BJ (cell line): ENCODE measurements at regions of chr1 and their contacts with region 1.

Region 1: DNA sequence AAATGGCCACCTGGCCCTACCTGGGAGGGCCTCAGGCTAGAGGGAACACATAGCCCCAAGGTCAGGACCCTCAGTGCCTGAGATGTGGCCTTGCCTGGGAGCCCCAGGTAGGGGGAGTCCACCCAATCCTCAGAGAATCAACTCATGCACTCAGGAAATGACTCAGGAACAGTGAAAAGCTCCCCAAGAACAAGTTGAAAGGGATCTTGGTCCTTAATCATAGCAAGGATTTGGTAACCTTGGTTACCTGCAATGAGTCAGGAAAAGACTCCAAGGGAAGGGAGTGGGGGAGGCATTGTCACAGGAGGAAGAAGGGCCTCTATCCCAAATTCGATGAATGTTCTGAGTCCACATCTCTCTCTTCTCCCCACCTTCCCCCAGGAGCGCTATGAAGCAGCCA is 17.0 kb downstream of the MAP7D1 start:
- DNase-seq: no peak
- H3K4me3 ChIP-seq: no peak overlapping the region
- H3K27me3 ChIP-seq: no peaks in the 10 kb centered on the region
- CTCF ChIP-seq: no peak

Region 2: DNA sequence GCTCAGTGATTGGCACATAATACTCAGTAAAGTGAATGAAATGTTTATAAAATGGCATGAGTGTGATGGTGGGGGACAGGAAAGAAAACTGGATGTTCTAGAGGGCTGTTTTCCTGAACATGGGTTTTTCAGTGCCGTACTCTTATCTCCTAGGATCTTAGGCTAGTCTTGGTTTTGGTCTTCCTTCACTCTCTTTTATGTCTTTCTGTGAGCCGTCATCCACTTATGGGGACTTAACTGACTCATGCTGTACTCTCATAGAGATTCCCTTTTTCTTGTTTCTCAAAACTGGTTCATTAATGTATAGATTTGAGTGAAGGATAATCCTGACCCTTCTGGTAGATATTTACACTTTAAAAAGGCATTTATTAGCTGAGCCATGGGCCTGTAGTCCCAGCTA is 225.4 kb before region 1 on chr1:
- CTCF ChIA-PET with region 1: no interaction called
- POLR2A ChIA-PET with region 1: no interaction called
- DNase-seq: no peak
- H3K4me3 ChIP-seq: no peak overlapping the region
- H3K27me3 ChIP-seq: no peaks in the 10 kb centered on the region
- CTCF ChIP-seq: no peak

Region 3: GRCh38 chr1:36083993-36084738 is 88.8 kb before region 1 on chr1 and contains the start of gene TEKT2:
- CTCF ChIA-PET with region 1: no interaction called
- POLR2A ChIA-PET with region 1: no interaction called
- DNase-seq: no peak
- H3K4me3 ChIP-seq: peak within 1 kb of the TSS; percentile 44
- H3K27me3 ChIP-seq: no peaks in the 10 kb centered on the region
- CTCF ChIP-seq: no peak
- polyA plus RNA-seq, gene TEKT2: 0.10 and 0.16 TPM in 2 replicates

Region 4: DNA sequence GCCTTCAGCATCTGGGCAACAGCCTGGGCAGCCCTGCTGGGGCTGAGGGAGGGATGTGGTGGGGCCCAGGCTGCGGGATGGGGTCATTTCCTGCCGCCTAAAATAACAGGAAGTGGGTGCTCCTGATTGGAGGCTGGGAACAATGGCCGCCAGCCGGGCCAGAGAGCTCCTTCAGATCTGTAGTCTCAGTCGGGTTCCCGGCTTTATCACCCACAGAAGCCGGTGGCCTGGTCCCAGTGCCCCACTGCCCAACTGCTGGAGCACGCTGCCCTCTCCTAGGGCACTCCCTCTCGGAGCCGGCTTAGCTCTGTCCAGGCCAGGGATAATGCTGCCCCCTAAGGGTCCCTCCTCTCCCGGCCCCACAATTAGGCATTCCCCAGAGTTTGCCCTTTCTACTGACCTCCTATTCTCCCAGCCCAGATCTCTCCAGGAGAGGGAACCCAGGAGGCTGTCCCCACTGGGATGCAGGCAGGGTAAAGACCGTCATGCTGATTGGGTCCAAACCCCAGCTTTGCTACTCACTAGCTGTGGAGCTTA is 12.0 kb before region 1 on chr1:
- CTCF ChIA-PET with region 1: interaction called, 13 read pairs
- POLR2A ChIA-PET with region 1: no interaction called
- DNase-seq: no peak
- H3K4me3 ChIP-seq: peak overlapping the region; percentile 43
- H3K27me3 ChIP-seq: no peaks in the 10 kb centered on the region
- CTCF ChIP-seq: peak; percentile 53

Region 5: DNA sequence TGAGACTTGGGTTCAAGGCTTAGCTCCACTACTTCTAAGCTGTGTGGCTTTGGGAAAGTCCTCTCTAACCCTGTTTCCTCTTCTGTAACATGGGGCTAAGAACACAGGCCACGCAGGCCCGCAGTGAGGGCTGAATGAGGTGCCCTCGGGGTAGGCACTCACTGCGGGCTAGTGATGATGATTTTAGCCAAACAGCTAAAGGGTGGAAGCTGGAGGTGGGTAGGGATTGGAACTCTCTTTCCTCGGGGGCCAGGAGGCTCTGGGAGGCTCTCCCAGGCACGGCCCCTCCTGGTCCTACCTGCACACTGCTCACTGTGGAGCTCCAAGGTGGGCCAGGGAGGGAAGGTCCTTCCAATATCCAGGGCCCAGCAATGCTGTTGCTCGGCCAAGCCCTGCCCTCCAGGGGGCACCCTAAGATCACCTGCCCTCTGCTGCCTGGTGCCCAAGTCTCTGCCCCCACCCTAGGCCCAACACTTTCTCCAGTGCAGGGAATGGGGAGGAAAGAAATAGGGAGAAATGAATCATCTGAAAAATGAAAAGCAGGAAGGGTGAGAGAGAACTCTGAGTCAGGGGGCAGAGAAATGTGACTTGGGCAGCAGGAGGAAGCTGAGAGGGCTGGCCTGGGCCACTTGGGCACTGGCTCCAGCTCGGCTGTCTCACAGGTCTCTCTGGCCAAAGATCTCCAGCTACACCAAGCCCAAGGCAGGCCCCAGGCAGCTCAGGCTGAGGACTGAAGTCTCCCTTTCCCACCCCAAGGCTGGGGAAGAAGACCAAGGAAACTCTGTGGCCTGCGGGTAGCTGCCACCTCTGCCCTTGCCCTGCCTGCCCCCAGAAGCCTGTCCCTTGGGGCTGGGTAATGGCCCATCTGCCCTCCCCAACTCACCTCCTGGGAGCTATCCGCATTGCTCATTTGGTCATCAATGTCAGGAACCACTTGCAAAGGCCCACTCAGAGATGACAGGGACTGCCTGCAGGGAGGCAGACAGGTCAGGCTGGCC is 169.8 kb after region 1 on chr1:
- CTCF ChIA-PET with region 1: no interaction called
- POLR2A ChIA-PET with region 1: no interaction called
- DNase-seq: no peak
- H3K4me3 ChIP-seq: no peak overlapping the region
- H3K27me3 ChIP-seq: no peaks in the 10 kb centered on the region
- CTCF ChIP-seq: peak; percentile 81